ENCODE measurements at regions of chr9 and their contacts with region 1.

Region 1: DNA sequence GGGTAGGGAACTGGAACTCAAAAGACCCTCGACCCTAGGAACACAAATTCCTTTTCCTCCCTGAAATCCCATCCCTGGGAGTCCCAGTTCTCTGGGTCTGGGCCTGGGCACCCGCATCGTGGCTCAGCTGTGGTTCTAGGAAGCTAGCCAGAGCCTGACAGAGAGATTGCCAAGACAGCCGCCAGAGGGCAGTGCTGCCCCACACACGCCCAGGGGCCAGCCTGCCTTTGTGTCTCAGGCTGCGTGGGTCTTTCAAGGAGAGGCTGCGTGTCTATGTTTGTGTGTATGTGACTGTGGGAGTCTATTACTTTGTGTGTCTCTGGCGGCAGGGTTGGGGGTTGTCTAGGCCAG is 32.0 kb upstream of the TTLL11 start:
- DNase-seq: peak; percentile 79 to 88 (median 80)
- ATAC-seq: peak; percentile 77 to 87 (median 82)
- H3K4me3 ChIP-seq: no peak overlapping the region
- H3K27ac ChIP-seq: no peak overlapping the region
- H3K4me1 ChIP-seq: peaks cover 6 to 40% (median 22%) of the 10 kb centered on the region in 12 donors
- H3K27me3 ChIP-seq: peaks cover 0 to 26% (median 0%) of the 10 kb centered on the region in 9 donors
- CTCF ChIP-seq: peak in 11 of 12 donors; percentile 93 to 99 (median 94)
- POLR2A ChIP-seq: no peak

Region 2: GRCh38 chr9:121770415-121771273 is 354.5 kb before region 1 on chr9:
- intact Hi-C with region 1: no loop called
- DNase-seq: peak in 3 of 5 donors; percentile 9 to 52 (median 18)
- ATAC-seq: no peak
- H3K4me3 ChIP-seq: no peak overlapping the region
- H3K27ac ChIP-seq: peak overlapping the region in 2 of 12 donors; percentile 4 to 77
- H3K4me1 ChIP-seq: peaks cover 0 to 70% (median 23%) of the 10 kb centered on the region in 12 donors
- H3K27me3 ChIP-seq: no peaks in the 10 kb centered on the region
- CTCF ChIP-seq: no peak
- POLR2A ChIP-seq: no peak

Region 3: GRCh38 chr9:122056484-122056883 is 68.6 kb before region 1 on chr9:
- intact Hi-C with region 1: no loop called
- DNase-seq: no peak
- ATAC-seq: no peak
- H3K4me3 ChIP-seq: no peak overlapping the region
- H3K27ac ChIP-seq: no peak overlapping the region
- H3K4me1 ChIP-seq: peaks cover 0 to 7% (median 0%) of the 10 kb centered on the region in 12 donors
- H3K27me3 ChIP-seq: no peaks in the 10 kb centered on the region
- CTCF ChIP-seq: no peak
- POLR2A ChIP-seq: no peak

Region 4: DNA sequence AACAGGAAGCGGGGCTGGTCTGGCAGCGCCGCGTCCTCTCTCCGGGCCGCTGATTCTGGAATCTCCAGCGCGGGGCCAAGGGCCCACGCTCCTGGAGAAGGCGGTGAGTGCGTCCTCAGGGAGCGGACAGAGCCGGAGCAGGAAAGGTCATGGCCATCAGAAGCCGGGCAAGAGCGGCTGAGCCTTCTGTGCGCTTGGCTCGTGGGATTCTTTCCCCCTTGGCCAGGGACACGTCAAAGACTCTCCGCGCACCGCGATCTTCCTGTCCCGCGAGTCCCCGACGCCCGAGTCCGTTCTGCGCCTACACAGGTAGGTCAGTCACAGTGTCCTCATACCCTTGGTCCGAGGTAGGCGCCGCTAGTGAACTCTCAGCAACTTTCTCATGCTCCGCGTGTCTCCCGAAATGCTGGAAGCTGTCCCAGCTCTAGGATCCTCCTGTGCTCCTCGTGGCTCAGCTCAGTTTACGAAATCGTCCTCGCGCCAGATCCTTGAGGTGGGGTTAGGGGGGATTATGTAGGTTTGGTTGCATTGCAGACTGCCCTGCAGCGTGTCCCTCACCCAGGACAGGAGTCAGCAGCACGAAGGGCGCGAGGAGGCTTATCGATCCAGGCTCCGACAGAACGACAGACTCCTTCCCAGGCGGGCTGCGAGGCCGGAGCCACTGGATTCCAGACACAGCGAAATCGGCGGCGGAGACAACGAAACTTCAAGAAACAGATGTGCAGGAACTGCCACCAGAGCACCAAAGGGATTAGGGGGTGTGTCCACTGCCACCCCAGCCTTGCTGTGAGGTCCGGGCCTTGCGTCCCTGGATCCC is 94.9 kb after region 1 on chr9:
- intact Hi-C with region 1: loop called in 2 of 10 experiments (anchors 5 to 10 kb)
- DNase-seq: no peak
- ATAC-seq: peak in 2 of 4 donors; percentile 26 to 31
- H3K4me3 ChIP-seq: peak overlapping the region in 10 of 12 donors; percentile 2 to 42 (median 22)
- H3K27ac ChIP-seq: peak overlapping the region in 1 of 12 donors; percentile 8
- H3K4me1 ChIP-seq: peaks cover 0 to 52% (median 23%) of the 10 kb centered on the region in 12 donors
- H3K27me3 ChIP-seq: peaks cover 36 to 100% (median 89%) of the 10 kb centered on the region in 9 donors
- CTCF ChIP-seq: no peak
- POLR2A ChIP-seq: no peak

Region 5: DNA sequence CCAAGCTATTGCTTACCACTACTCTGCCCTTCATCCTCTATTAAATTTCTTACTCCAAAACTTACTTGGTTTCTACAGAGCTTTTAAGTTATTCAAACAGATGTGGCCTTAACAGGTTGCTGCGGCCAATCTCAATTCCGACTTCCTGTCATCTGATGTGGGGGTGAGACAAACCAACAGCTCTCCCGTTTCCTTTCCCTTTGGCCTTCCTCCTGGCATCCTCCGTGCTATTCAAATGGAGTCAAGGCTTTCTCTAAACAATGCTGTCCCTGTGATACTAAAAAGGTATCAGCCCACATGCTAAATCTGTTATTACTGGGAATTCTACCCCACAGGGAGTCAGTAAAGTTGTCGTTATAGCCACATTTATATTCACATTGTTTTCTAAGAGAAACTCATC is 127.7 kb after region 1 on chr9:
- intact Hi-C with region 1: loop called in 2 of 10 experiments (anchors 5 to 10 kb)
- DNase-seq: peak in 4 of 5 donors; percentile 34 to 64 (median 48)
- ATAC-seq: peak in 3 of 4 donors; percentile 56 to 93 (median 60)
- H3K4me3 ChIP-seq: no peak overlapping the region
- H3K27ac ChIP-seq: peak overlapping the region in 11 of 12 donors; percentile 18 to 78 (median 53)
- H3K4me1 ChIP-seq: peaks cover 0 to 38% (median 18%) of the 10 kb centered on the region in 12 donors
- H3K27me3 ChIP-seq: no peaks in the 10 kb centered on the region
- CTCF ChIP-seq: no peak
- POLR2A ChIP-seq: no peak

Region 6: DNA sequence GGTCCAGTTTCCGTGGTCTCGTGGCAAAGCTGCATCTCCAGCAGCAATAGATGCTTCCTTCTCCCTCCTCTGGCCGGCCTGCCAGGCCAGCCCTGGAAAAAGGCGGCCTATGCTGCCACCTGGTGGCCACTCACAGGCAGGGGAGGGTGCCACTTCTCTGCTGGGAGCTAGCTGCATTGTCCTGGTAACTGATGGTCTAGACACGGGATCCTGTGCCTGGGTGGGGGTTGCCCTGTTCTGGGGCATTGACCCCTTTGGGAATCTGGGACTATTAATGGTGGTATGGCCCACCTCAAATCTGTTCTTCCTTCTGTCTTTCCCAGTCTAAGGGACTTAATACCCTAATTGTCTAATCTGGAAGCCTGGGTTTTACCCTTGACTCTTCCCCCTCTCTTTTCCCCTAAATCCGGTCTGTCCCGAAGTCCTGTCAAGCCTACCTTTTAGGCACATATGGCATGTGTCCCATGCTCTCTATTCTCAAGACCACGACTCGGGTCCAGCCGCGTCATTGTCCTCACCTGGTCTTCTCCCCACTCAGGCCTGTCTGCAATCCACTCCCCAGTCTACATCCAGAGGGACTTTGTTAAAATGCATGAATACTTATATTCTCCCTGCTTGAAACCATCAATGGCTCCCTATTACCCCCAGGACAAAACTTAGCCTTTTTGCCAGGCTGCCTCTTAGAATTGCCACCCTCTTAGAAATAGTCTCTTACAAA is 225.7 kb after region 1 on chr9:
- intact Hi-C with region 1: loop called (anchors 1 to 2 kb)
- DNase-seq: peak; percentile 76 to 92 (median 78)
- ATAC-seq: peak; percentile 81 to 89 (median 83)
- H3K4me3 ChIP-seq: no peak overlapping the region
- H3K27ac ChIP-seq: no peak overlapping the region
- H3K4me1 ChIP-seq: peaks cover 0 to 28% (median 17%) of the 10 kb centered on the region in 12 donors
- H3K27me3 ChIP-seq: peaks cover 0 to 5% (median 0%) of the 10 kb centered on the region in 9 donors
- CTCF ChIP-seq: peak; percentile 94 to 99 (median 96)
- POLR2A ChIP-seq: no peak

Region 7: DNA sequence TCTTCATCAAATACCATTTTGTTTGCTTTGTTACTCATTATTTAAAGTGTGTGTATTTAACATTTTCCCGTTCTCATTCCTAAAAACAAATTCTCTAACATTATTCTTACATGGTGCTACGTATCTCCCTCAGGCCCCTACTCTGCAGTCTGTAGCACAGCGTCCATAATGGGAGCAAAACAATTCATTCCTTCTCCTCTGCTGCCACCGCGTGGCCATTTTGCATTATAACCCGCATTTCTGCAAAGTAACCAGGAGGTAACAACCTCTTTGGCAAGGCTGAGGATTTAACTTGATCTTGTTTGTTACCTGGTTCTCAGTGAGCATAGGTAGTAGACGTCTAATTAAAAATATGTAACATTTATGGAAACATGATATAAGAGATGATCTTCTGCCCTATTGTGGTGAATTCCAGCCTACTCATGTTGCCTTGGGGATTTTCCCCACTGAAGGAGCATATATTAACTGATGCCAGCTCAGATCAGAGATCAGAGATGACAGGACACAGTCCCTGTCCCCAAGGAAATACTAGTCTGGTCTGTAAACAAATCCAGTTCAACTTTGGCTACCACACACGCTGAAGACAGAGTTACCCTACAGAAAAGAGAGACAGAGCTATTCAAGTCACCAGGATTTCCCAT is 685.3 kb after region 1 on chr9:
- intact Hi-C with region 1: loop called in 5 of 10 experiments (anchors 2 to 10 kb)
- DNase-seq: peak; percentile 59 to 76 (median 61)
- ATAC-seq: peak; percentile 81 to 93 (median 89)
- H3K4me3 ChIP-seq: no peak overlapping the region
- H3K27ac ChIP-seq: no peak overlapping the region
- H3K4me1 ChIP-seq: peaks cover 0 to 4% (median 0%) of the 10 kb centered on the region in 12 donors
- H3K27me3 ChIP-seq: no peaks in the 10 kb centered on the region
- CTCF ChIP-seq: peak; percentile 65 to 86 (median 76)
- POLR2A ChIP-seq: no peak

Measured in heart left ventricle (tissue), 16 donors.